Transverse colon (tissue), 4 donors: ENCODE measurements at regions of chr9 and their contacts with region 1.

Region 1: DNA sequence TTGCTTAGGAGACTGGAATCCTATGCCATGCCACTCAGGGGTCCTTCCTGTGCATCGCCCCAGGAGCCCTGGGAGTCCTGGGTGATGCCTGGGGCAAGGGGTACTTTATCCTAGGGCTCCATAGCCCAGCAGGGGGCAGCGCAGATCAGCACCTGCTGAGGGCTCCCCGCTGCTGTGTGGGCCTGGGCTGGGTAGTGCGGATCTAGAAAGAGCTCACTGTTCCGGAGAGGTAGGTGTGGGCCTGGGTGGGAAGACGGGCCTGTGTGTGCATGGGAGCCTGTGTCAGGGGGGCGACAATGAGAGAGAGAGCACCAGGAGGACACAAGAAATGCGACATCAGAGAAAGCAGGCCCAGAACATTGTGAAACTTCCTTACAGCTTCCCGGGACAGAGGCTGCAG is 11.4 kb upstream of the DAB2IP start:
- DNase-seq: peak; percentile 86
- H3K4me3 ChIP-seq: no peak overlapping the region
- H3K27ac ChIP-seq: peak overlapping the region; percentile 69 to 76 (median 74)
- H3K4me1 ChIP-seq: peaks cover 14 to 38% (median 26%) of the 10 kb centered on the region in 4 donors
- H3K27me3 ChIP-seq: no peaks in the 10 kb centered on the region
- CTCF ChIP-seq: peak; percentile 66 to 90 (median 73)
- EP300 ChIP-seq: no peak
- POLR2A ChIP-seq: no peak

Region 2: GRCh38 chr9:120152295-120152694 is 1487.8 kb before region 1 on chr9:
- in situ Hi-C with region 1: no loop called
- intact Hi-C with region 1: loop called (anchors 10 kb)
- DNase-seq: no peak
- H3K4me3 ChIP-seq: no peak overlapping the region
- H3K27ac ChIP-seq: no peak overlapping the region
- H3K4me1 ChIP-seq: no peaks in the 10 kb centered on the region
- H3K27me3 ChIP-seq: no peaks in the 10 kb centered on the region
- CTCF ChIP-seq: no peak
- EP300 ChIP-seq: no peak
- POLR2A ChIP-seq: no peak